ENCODE measurements at regions of chr2 and their contacts with region 1.

Region 1: GRCh38 chr2:126776692-126777619 is 121.0 kb downstream of the GYPC start:
- DNase-seq: peak; percentile 87
- ATAC-seq: peak; percentile 89
- H3K4me3 Mint-ChIP-seq: peak overlapping the region; percentile 88
- H3K27ac Mint-ChIP-seq: peak overlapping the region; percentile 89
- H3K4me1 Mint-ChIP-seq: peaks cover 15% of the 10 kb centered on the region
- H3K27me3 Mint-ChIP-seq: peaks cover 6% of the 10 kb centered on the region
- CTCF ChIP-seq: peak; percentile 100

Region 2: GRCh38 chr2:126399001-126399400 is 378.0 kb before region 1 on chr2:
- CTCF ChIA-PET with region 1: interaction called, 6 read pairs
- POLR2A ChIA-PET with region 1: no interaction called
- intact Hi-C with region 1: loop called (anchors 5 kb)
- DNase-seq: peak; percentile 46
- ATAC-seq: no peak
- H3K4me3 Mint-ChIP-seq: no peak overlapping the region
- H3K27ac Mint-ChIP-seq: no peak overlapping the region
- H3K4me1 Mint-ChIP-seq: no peaks in the 10 kb centered on the region
- H3K27me3 Mint-ChIP-seq: peaks cover 16% of the 10 kb centered on the region
- CTCF ChIP-seq: no peak

Region 3: GRCh38 chr2:126614524-126615227 is 162.3 kb before region 1 on chr2:
- CTCF ChIA-PET with region 1: no interaction called
- POLR2A ChIA-PET with region 1: no interaction called
- intact Hi-C with region 1: no loop called
- DNase-seq: no peak
- ATAC-seq: no peak
- H3K4me3 Mint-ChIP-seq: no peak overlapping the region
- H3K27ac Mint-ChIP-seq: no peak overlapping the region
- H3K4me1 Mint-ChIP-seq: peaks cover 2% of the 10 kb centered on the region
- H3K27me3 Mint-ChIP-seq: no peaks in the 10 kb centered on the region
- CTCF ChIP-seq: no peak

Region 4: GRCh38 chr2:126634273-126634861 is 142.6 kb before region 1 on chr2:
- CTCF ChIA-PET with region 1: interaction called, 11 read pairs
- POLR2A ChIA-PET with region 1: no interaction called
- intact Hi-C with region 1: no loop called
- DNase-seq: peak; percentile 44
- ATAC-seq: no peak
- H3K4me3 Mint-ChIP-seq: no peak overlapping the region
- H3K27ac Mint-ChIP-seq: no peak overlapping the region
- H3K4me1 Mint-ChIP-seq: no peaks in the 10 kb centered on the region
- H3K27me3 Mint-ChIP-seq: no peaks in the 10 kb centered on the region
- CTCF ChIP-seq: peak; percentile 71

Region 5: DNA sequence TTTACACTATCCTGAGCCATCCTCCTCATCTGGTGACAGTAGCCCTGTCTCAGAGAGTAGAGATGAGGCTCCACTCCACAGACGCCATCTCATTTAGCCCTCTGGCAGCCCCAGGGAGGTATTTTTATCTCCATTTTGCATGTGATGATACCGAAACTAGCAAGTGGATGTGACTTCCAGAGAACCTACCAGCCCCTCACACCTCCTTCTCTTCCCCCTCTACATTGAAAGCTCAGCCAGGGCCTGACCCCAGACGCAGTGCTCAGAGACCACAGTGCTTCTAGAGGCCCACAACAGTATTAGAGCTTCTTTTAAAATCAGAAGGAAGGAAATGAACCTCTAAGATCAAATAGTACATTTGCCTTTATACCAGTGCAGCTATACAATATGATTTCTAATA is 112.7 kb before region 1 on chr2:
- CTCF ChIA-PET with region 1: interaction called, 12 read pairs
- POLR2A ChIA-PET with region 1: no interaction called
- intact Hi-C with region 1: loop called (anchors 5 kb)
- DNase-seq: peak; percentile 75
- ATAC-seq: peak; percentile 82
- H3K4me3 Mint-ChIP-seq: peak overlapping the region; percentile 68
- H3K27ac Mint-ChIP-seq: peak overlapping the region; percentile 94
- H3K4me1 Mint-ChIP-seq: peaks cover 94% of the 10 kb centered on the region
- H3K27me3 Mint-ChIP-seq: no peaks in the 10 kb centered on the region
- CTCF ChIP-seq: no peak